Activated CD8-positive, alpha-beta T cell treated with anti-CD3 and anti-CD28 coated beads, Interleukin-2, amount 10 ng/mL, durations not matched to agents 7 days and 5 days (primary cell): ENCODE measurements at regions of chr16 and their contacts with region 1.

Region 1: GRCh38 chr16:84726079-84726668 is 26.4 kb downstream of the USP10 start:
- DNase-seq: peak; percentile 88
- ATAC-seq: peak; percentile 75
- H3K4me3 Mint-ChIP-seq: peak overlapping the region; percentile 37
- H3K27ac Mint-ChIP-seq: no peak overlapping the region
- H3K4me1 Mint-ChIP-seq: peaks cover 73% of the 10 kb centered on the region
- H3K27me3 Mint-ChIP-seq: no peaks in the 10 kb centered on the region

Region 2: DNA sequence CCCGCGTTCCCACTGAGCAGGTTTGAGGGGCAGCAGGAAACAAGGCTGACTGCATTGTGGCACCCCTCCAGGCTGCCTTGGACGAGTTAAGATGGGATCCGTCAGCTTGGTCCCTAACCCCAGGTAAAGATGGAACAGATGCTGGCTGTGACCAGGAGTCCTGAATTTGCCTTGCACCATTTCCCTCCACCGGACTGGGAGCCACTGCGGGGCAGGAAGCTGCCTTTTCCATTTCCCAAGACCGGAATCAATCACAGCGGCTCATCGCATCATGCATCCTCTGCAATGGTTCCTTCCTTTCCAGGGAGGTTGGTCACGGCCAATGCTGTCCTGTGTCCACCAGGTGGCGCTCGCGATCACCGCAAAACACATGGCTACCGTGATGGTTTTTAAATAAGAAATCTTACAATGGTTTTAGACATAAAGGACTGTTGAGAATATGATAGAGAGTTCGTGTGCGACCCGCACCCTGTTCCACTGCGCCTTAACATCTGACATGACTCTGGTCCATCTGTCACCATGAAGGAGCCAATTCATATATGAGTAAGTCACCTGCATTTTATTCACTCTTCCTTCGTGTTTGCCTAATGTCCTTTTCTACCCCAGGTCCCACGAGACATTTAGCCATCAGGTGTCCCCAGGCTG is 214.9 kb before region 1 on chr16:
- CTCF ChIA-PET with region 1: interaction called, 16 read pairs
- POLR2A ChIA-PET with region 1: no interaction called
- DNase-seq: peak; percentile 89
- ATAC-seq: no peak
- H3K4me3 Mint-ChIP-seq: peak overlapping the region; percentile 55
- H3K27ac Mint-ChIP-seq: peak overlapping the region; percentile 88
- H3K4me1 Mint-ChIP-seq: peaks cover 91% of the 10 kb centered on the region
- H3K27me3 Mint-ChIP-seq: no peaks in the 10 kb centered on the region

Region 3: GRCh38 chr16:84617791-84618580 is 108.2 kb before region 1 on chr16 and contains the start of gene COTL1:
- CTCF ChIA-PET with region 1: interaction called, 100 read pairs
- POLR2A ChIA-PET with region 1: no interaction called
- DNase-seq: peak; percentile 97
- ATAC-seq: peak; percentile 85
- H3K4me3 Mint-ChIP-seq: peak within 1 kb of the TSS; percentile 98
- H3K27ac Mint-ChIP-seq: peak within 1 kb of the TSS; percentile 88
- H3K4me1 Mint-ChIP-seq: peaks cover 58% of the 10 kb centered on the region
- H3K27me3 Mint-ChIP-seq: peaks cover 6% of the 10 kb centered on the region
- total RNA-seq, gene COTL1: 837 to 887 TPM

Region 4: DNA sequence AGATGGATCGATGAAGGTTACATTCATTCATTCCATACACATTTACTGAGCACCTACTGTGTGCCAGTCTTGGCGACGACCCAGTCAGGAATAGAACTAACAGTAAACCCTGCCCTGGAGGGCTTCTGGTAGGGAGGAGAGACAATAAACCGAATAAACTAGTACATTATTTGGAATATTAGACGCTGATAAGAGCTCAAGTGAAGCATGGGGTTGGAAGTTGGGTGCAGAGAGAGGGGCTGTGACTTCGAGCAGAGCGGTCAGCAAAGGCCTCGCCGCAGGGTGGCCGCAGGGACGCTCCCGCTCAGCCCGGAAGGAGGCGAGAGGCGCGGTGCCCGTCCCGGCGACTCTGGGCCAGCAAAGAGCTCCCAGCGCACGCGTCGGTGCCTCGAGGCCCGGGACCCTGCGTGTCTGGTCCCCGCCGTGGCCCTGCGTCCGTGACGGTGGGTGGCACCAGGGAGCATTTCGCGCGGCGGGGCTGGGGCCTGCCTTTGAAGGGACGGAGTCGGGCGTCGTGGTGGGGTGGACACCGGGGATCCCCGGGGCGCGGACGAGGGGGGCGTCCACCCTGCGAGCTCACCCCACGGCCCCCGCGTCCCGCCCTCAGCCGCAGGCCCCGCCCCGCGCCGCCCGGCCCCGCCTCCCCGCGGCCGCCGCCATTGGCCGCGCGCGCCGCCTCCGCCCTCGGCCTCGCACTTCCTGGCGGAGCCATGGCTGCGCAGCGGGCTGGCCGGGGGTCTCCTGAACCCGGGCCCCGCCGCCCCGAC is 78.2 kb before region 1 on chr16 and contains the start of gene KLHL36:
- CTCF ChIA-PET with region 1: interaction called, 18 read pairs
- POLR2A ChIA-PET with region 1: no interaction called
- DNase-seq: peak; percentile 66
- ATAC-seq: peak; percentile 84
- H3K4me3 Mint-ChIP-seq: peak within 1 kb of the TSS; percentile 72
- H3K27ac Mint-ChIP-seq: peak within 1 kb of the TSS; percentile 71
- H3K4me1 Mint-ChIP-seq: peaks cover 40% of the 10 kb centered on the region
- H3K27me3 Mint-ChIP-seq: peaks cover 19% of the 10 kb centered on the region
- total RNA-seq, gene KLHL36: 31.4 to 32.6 TPM

Region 5: GRCh38 chr16:84672276-84673202 is 53.6 kb before region 1 on chr16:
- CTCF ChIA-PET with region 1: interaction called, 72 read pairs
- POLR2A ChIA-PET with region 1: no interaction called
- DNase-seq: peak; percentile 84
- ATAC-seq: peak; percentile 94
- H3K4me3 Mint-ChIP-seq: no peak overlapping the region
- H3K27ac Mint-ChIP-seq: no peak overlapping the region
- H3K4me1 Mint-ChIP-seq: peaks cover 10% of the 10 kb centered on the region
- H3K27me3 Mint-ChIP-seq: peaks cover 11% of the 10 kb centered on the region

Region 6: DNA sequence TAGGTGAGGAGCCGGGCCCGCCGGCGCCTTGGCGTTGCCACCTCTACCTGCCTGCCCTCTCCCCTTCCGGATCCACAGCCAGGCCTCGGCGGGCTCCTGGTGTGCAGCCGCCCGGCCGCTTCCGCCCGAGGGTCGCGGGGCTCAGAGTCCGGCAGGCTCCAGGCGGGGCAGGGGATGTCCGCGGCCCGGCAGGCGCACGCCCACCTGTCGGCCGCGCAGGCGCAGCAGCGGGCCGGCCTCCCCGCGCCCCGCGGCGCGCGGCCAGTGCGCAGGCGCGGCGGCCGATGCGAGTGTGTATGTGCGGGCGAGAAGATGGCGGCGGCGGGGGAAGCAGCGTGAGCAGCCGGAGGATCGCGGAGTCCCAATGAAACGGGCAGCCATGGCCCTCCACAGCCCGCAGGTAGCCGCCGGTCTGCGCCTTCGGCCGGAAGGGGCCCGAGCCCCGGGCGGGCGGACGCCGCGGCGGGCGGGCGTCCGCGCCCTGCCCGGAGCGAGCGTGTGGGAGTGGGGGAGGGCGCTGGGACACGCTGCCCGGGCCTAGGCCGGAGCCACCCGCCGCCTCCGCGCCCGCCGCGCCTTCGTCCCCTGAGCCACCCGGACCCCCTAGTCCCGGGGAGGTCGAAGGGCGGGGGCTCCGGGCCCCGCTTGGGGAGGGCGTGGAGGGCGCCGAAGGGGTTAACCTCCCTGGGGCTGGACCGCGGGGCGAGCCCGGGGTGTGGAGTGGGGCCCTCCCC is 26.3 kb before region 1 on chr16 and contains the start of gene USP10:
- CTCF ChIA-PET with region 1: interaction called, 34 read pairs
- POLR2A ChIA-PET with region 1: interaction called, 3 read pairs
- DNase-seq: peak; percentile 86
- ATAC-seq: peak; percentile 89
- H3K4me3 Mint-ChIP-seq: peak within 1 kb of the TSS; percentile 98
- H3K27ac Mint-ChIP-seq: peak within 1 kb of the TSS; percentile 93
- H3K4me1 Mint-ChIP-seq: peaks cover 38% of the 10 kb centered on the region
- H3K27me3 Mint-ChIP-seq: no peaks in the 10 kb centered on the region
- total RNA-seq, gene USP10: 82.9 to 88.3 TPM

Region 7: DNA sequence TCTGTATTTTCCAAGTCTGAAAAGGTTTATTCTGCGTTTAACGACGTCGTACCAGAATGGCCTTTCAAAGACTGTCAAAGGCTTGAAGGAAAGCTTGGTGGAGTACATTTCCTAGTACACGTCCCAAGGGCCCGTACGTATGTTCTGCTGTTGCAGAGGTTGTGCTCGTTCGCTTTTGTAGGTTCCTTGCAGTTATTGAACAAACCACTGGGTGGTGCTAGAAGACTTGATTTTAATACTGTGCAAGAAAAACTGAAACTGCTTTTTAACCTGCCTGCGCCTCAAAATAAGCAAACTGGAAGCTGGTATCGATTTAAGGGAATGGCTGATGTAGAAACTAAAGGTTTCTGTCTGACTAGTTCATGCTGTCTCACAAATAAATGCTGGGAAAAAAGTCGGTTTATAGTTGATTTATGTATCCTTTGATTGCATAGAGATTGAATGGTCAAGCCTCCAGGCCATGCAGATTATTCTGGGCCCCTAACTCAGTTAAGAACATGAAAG is 28.2 kb after region 1 on chr16:
- CTCF ChIA-PET with region 1: interaction called, 19 read pairs
- POLR2A ChIA-PET with region 1: no interaction called
- DNase-seq: peak; percentile 87
- ATAC-seq: peak; percentile 86
- H3K4me3 Mint-ChIP-seq: peak overlapping the region; percentile 41
- H3K27ac Mint-ChIP-seq: no peak overlapping the region
- H3K4me1 Mint-ChIP-seq: peaks cover 62% of the 10 kb centered on the region
- H3K27me3 Mint-ChIP-seq: no peaks in the 10 kb centered on the region

Region 8: DNA sequence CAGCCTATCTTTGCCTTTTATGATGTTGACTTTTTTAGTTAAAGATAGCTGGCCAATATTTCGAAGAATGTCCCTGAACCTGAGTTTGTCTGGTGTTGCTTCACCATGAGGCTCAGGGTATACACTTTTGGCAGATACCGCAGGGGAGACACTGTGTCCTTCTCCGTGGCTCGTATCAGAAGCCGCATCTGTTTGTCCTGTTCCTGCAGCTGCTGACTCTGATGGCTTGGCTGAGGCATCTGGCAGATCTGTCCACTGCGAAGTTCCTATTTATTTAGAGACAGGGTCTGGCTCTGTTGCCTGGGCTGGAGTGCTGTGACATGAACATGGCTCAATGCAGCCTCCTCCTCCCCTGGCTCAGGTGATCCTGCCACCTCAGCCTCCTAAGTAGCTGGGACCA is 187.1 kb after region 1 on chr16:
- CTCF ChIA-PET with region 1: no interaction called
- POLR2A ChIA-PET with region 1: no interaction called
- DNase-seq: no peak
- ATAC-seq: no peak
- H3K4me3 Mint-ChIP-seq: no peak overlapping the region
- H3K27ac Mint-ChIP-seq: no peak overlapping the region
- H3K4me1 Mint-ChIP-seq: no peaks in the 10 kb centered on the region
- H3K27me3 Mint-ChIP-seq: peaks cover 15% of the 10 kb centered on the region